GM12878 (cell line): ENCODE measurements at regions of chr1 and their contacts with region 1.

Region 1: DNA sequence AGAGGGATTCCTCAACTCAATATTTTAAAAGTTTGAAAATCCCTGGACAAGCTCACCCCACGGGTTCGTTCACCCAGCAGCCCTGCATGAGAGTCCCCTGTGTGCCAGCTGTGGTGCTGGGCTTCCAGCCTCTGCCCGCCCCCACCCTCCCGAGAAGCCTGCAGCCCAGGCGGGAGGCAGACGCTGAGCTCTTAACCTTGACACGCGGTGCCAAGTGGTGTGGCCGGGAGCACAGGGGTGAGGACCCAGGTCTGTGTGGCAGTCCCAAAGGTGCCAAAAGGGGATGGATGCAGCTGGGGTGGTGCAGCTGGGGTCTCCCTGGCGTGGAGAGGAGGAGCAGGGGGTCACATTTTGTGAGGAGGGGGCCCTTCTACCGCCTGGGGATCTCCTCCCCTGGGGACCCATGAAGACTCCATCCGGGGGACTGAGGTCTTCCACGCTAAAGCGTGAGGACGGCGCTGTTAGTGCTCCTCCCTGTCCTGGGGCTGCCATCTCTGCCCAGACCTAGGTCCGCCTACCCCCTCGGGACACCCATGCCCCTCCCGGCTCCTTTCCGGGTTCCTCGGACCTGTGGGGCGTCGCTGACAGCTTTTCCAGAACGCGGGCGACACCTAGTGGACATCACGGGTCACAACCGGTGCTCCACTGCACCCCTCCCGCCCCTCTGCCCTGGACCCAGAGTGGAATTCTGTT is 12.9 kb downstream of the PLA2G2F start:
- DNase-seq: no peak
- ATAC-seq: peak; percentile 97
- H3K4me3 ChIP-seq: peak overlapping the region; percentile 43; the same call in 1 of the 2 replicates
- H3K27ac ChIP-seq: no peak overlapping the region
- H3K4me1 ChIP-seq: peaks cover 9% of the 10 kb centered on the region
- H3K27me3 ChIP-seq: no peaks in the 10 kb centered on the region
- CTCF ChIP-seq: peak; percentile 83 to 97 (median 91); a peak in 5 of 6 replicates
- EP300 ChIP-seq: no peak
- POLR2A ChIP-seq: no peak
- RAD21 ChIP-seq: peak; percentile 96

Region 2: DNA sequence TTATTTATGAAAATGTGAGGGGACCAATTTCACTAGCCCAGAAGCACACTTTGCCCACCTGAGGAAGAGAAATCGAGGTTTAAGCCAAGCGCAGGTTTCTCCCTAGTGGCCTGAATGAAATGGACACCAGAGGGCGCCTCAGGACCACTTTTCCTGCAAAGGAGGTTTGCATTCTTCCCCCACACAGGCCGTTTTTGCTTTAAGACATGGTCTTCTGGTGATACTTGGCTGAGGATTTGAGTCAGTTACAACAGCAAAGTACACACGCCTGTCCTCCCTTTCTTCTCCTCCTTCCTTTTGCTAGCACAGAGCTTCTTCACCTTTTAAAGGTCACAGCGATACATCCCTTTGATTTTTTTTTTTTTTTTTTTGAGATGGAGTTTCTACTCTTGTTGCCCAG is 234.0 kb before region 1 on chr1:
- CTCF ChIA-PET with region 1: interaction called, 51 read pairs
- POLR2A ChIA-PET with region 1: interaction called, 5 read pairs
- RAD21 ChIA-PET with region 1: interaction called, 34 read pairs
- SMC1A ChIA-PET with region 1: interaction called, 41 read pairs
- in situ Hi-C with region 1: loop called (anchors 5 kb)
- intact Hi-C with region 1: loop called (anchors 1 kb)
- DNase-seq: peak; percentile 33
- ATAC-seq: peak; percentile 94
- H3K4me3 ChIP-seq: no peak overlapping the region
- H3K27ac ChIP-seq: no peak overlapping the region
- H3K4me1 ChIP-seq: no peaks in the 10 kb centered on the region
- H3K27me3 ChIP-seq: no peaks in the 10 kb centered on the region
- CTCF ChIP-seq: peak; percentile 80 to 98 (median 91); a peak in 5 of 6 replicates
- EP300 ChIP-seq: no peak
- POLR2A ChIP-seq: no peak
- RAD21 ChIP-seq: peak; percentile 98

Region 3: DNA sequence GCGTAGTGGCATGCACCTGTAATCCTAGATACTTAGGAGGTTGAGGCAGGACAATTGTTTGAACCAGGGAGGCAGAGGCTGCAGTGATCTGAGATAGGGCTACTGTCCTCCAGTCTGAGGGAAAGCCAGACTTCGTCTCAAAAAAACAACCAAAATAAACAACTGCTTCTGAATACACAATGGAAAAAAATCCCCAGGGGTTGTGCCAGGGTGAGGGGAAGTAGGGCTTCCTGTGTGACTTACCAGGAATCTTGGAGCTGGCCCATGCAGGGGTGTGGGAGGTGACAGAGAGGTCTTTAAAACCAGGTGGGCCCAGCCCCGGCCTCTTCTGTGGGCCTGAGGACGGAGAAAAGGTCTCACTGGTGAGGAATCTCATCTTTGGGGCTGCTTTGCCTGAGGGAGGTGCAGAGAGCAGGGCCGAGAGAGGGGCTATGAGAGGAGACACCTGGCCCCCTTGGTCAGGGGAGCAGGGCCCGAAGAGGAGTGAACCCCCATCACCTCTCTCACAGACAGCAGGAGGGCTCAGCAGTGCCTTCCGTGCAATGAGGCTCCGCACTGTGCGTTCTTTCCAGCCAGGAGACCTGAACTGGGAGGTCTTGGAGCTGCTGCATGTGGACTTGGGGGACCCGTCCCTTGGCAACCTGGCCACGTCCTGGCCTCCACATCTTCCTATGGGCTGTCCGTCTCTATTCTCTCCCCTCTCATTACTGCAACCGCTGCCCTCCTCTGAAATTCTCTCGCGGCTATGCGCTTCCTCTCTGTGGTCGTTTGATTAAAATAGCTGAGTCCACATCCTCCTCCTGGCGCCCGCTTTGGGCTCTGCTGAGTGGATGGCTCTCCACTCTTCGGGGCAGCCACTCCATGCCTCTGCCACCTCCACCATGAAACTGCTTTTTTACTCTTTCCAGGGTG is 71.4 kb before region 1 on chr1:
- CTCF ChIA-PET with region 1: interaction called, 5 read pairs
- POLR2A ChIA-PET with region 1: interaction called, 4 read pairs
- RAD21 ChIA-PET with region 1: interaction called, 11 read pairs
- SMC1A ChIA-PET with region 1: interaction called, 4 read pairs
- in situ Hi-C with region 1: no loop called
- intact Hi-C with region 1: no loop called
- DNase-seq: peak; percentile 57
- ATAC-seq: peak; percentile 88
- H3K4me3 ChIP-seq: peak overlapping the region; percentile 21; the same call in 1 of the 2 replicates
- H3K27ac ChIP-seq: peak overlapping the region; percentile 56
- H3K4me1 ChIP-seq: peaks cover 45% of the 10 kb centered on the region
- H3K27me3 ChIP-seq: no peaks in the 10 kb centered on the region
- CTCF ChIP-seq: 0 out of 6 replicates have a peak, but pooled peaks of 1 of the 3 experiments have one; percentile 4
- EP300 ChIP-seq: no peak
- POLR2A ChIP-seq: no peak
- RAD21 ChIP-seq: peak; percentile 23; the same call in 1 of the 2 replicates

Region 4: GRCh38 chr1:20124456-20125057 is 27.5 kb before region 1 on chr1:
- CTCF ChIA-PET with region 1: interaction called, 17 read pairs
- POLR2A ChIA-PET with region 1: interaction called, 4 read pairs
- RAD21 ChIA-PET with region 1: interaction called, 28 read pairs
- SMC1A ChIA-PET with region 1: interaction called, 15 read pairs
- in situ Hi-C with region 1: no loop called
- intact Hi-C with region 1: no loop called
- DNase-seq: no peak
- ATAC-seq: peak; percentile 75
- H3K4me3 ChIP-seq: no peak overlapping the region
- H3K27ac ChIP-seq: peak overlapping the region; percentile 33
- H3K4me1 ChIP-seq: peaks cover 49% of the 10 kb centered on the region
- H3K27me3 ChIP-seq: no peaks in the 10 kb centered on the region
- CTCF ChIP-seq: no peak
- EP300 ChIP-seq: no peak
- POLR2A ChIP-seq: no peak
- RAD21 ChIP-seq: no peak

Region 5: DNA sequence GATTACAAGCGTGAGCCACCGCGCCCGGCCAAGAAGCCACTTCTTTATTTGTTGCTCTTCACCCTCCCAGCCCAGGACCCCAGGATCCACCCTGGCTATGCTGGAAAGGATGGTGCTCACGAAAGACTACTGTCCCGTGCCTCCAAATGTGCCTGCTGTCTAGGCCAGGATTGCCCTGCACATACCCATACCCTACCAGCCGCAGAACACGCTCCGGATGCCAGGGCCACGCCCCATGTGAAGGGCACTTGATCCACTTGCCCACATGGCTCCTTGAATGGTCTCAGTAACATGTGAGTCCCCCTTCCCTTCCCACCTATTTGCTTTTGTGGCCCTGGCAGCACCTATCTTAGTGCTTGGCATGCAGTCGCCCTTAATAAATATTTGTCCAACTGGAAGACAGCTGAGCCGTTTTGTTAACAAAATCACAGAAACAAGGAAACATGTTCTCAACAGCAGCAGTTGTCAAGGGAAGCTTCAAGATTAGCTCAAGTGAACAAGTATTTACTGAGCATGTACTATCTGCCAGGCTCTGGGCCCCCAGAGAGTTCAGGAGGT is 20.1 kb after region 1 on chr1:
- CTCF ChIA-PET with region 1: interaction called, 6 read pairs
- POLR2A ChIA-PET with region 1: no interaction called
- RAD21 ChIA-PET with region 1: interaction called, 5 read pairs
- SMC1A ChIA-PET with region 1: interaction called, 17 read pairs
- in situ Hi-C with region 1: no loop called
- intact Hi-C with region 1: no loop called
- DNase-seq: no peak
- ATAC-seq: no peak
- H3K4me3 ChIP-seq: no peak overlapping the region
- H3K27ac ChIP-seq: no peak overlapping the region
- H3K4me1 ChIP-seq: peaks cover 5% of the 10 kb centered on the region
- H3K27me3 ChIP-seq: peaks cover 0 to 2% of the 10 kb centered on the region in 2 experiments; a peak in 2 of 4 replicates
- CTCF ChIP-seq: no peak
- EP300 ChIP-seq: no peak
- POLR2A ChIP-seq: no peak
- RAD21 ChIP-seq: no peak